Tibial artery (tissue), 4 donors: ENCODE measurements at regions of chrX and their contacts with region 1.

Region 1: DNA sequence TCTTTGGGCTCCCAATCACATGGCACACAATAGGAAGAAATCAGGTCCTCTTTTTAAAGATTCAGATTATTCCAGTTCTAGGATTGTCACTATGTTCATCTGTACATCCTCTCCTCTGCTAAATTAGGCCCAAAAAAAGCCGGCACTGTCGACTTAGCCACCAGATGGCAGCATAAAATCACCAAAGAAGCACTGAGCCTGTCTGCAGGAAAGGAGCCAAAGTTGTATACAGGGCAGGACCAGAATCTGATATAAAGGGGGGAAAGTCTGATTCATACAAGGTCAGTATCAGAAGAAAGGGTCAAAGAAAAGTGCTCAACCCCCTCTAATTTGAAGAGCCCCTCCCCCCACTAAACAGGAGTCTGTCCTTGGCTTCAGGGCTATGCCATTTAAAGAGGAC is 292.5 kb downstream of the CHIC1 start:
- DNase-seq: peak in 1 of 2 donors; percentile 40
- H3K4me3 ChIP-seq: no peak overlapping the region
- H3K27ac ChIP-seq: no peak overlapping the region
- H3K4me1 ChIP-seq: no peaks in the 10 kb centered on the region
- H3K27me3 ChIP-seq: no peaks in the 10 kb centered on the region
- CTCF ChIP-seq: peak; percentile 43 to 66

Region 2: DNA sequence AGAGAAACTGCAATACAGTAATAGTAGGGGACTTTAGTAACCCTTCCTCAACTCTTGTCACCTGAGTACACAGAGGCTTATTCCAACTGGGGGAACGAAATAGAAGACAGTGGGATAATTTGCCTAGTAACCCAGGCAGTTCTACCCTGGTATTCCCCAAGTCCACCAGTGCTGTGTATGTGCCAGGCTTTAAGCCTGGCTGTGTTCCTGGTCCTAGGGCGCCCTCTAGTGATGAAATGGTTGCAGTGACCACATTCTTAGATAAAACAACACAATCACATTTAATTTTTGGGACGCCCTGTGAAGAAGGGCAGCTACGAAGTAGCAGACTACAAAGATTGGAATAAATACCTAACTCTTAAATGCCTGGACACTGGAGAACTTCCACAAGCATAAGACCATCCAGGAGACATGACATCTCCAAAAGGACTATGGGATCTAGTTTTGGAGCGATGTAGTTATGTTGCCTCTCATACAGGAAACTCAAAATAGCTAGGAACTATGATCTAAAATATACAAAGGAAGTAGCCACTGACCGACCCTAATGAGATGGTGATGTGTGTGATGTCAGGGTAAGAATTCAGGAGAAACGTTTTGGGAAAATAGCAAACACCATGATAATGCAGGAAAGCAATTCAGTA is 160.0 kb after region 1 on chrX:
- intact Hi-C with region 1: loop called (anchors 2 kb)
- DNase-seq: peak in 1 of 2 donors; percentile 45
- H3K4me3 ChIP-seq: no peak overlapping the region
- H3K27ac ChIP-seq: no peak overlapping the region
- H3K4me1 ChIP-seq: no peaks in the 10 kb centered on the region
- H3K27me3 ChIP-seq: no peaks in the 10 kb centered on the region
- CTCF ChIP-seq: peak; percentile 51 to 53

Region 3: GRCh38 chrX:74133156-74133796 is 277.7 kb after region 1 on chrX:
- intact Hi-C with region 1: loop called (anchors 5 kb)
- DNase-seq: no peak
- H3K4me3 ChIP-seq: no peak overlapping the region
- H3K27ac ChIP-seq: no peak overlapping the region
- H3K4me1 ChIP-seq: no peaks in the 10 kb centered on the region
- H3K27me3 ChIP-seq: no peaks in the 10 kb centered on the region
- CTCF ChIP-seq: peak; percentile 52 to 63

Region 4: DNA sequence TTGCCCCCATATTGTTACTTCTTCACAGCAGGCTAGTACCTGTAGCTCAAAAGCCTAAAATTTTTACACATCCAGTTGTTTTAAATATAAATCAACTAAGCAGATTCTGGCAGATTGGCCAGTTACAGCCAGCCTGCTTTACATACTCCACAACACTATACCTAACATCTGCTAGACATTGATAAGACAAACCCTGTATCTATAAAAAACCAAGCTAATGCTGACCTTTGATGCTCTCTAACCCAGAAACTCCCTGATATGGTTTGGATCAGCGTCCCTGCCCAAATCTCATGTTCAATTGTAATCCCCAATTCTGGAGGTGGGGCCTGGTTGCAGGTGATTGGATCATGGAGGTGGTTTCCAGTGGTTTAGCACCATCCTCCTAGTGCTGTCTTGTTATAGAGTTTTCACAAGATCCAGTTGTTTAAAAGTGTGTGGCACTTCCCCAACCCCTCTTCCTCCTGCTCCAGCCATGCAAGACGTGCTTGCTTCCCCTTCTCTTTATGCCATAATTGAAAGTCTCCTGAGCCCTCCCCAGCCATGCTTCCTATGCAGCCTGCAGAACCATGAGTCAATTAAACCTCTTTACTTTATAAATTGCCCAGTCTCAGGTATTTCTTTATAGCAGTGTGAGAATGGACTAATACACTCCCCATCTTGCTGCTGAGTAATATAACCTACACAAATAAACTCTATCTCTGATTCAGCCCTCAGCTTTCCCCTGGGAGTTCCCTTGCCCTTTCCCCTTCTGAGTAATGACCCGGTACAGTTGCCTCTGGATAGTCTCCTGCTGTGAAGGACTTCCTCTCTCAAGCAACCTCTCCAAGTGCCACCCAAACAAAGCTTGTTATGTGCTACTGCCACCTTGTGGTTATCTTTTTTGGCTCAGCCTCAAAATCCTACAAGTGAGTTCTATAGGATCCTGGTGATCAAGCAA is 488.1 kb after region 1 on chrX:
- intact Hi-C with region 1: loop called (anchors 5 kb)
- DNase-seq: peak; percentile 47 to 66
- H3K4me3 ChIP-seq: no peak overlapping the region
- H3K27ac ChIP-seq: no peak overlapping the region
- H3K4me1 ChIP-seq: no peaks in the 10 kb centered on the region
- H3K27me3 ChIP-seq: no peaks in the 10 kb centered on the region
- CTCF ChIP-seq: peak; percentile 44 to 52